ENCODE measurements at regions of chr14 and their contacts with region 1.

Region 1: DNA sequence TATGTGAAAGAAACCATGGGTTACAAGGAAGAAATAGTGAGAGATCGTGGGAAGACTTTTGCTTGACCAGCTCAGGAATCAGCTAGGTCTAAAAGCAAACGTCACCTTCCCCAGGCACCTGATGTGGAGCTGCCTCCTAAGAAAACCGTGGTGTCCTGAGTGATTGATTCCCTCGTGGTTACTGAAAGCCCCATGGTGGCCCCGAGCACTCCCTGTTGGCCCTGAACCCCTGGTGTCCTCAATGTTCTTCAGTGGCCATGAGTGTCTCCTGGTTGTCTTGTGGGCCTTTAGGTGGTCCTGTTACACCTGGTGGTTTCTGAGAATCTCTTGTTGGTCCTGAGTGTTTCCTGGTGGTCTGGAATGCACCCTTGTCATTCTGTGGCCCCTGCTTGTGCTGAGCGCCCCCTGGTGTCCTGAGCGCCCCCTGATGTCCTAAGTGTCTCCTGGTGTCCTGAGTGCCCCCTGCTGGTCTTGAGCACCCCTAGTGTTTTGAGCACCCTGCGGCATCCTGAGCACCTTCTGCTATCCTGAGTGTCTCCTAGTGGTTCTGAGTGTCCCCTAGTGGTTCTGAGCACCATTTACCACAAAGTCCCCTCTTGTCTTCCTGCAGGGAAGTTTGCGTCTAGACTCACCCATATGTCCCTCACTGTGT is 518.7 kb downstream of the TMEM121 start:
- DNase-seq: peak; percentile 10 to 76
- H3K4me3 ChIP-seq: no peak overlapping the region
- H3K4me1 ChIP-seq: no peaks in the 10 kb centered on the region
- H3K27me3 ChIP-seq: no peaks in the 10 kb centered on the region

Region 2: DNA sequence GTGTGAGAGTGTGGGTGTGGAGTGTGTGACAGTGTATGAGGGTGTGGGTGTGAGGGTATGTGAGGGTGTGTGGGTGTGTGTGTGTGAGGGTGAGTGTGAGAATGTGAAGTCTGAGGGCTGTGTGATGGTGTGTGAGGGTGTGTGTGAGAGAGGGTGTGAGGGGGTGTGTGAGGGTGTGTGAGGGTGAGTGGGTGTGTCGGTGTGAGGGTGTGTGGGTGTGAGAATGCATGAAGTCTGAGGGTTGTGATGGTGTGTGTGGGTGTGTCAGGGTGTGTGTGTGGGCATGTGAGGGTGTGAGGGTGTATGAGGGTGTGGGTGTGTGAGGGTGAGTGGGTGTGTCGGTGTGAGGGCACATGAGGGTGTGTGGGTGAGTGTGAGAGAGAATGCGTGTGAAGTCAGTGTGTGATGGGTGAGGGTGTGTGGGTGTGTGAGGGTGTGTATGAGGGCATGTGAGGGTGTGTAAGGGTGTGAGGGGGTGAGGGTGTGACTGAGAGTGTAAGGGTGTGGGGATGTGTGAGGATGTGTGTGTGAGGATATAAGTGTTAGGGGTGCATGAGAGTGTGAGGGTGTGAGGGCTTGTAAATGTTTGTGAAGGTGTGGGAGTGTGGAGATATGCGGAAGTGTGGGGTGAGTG is 482.2 kb before region 1 on chr14:
- in situ Hi-C with region 1: loop called (anchors 25 kb)
- DNase-seq: no peak
- H3K4me3 ChIP-seq: no peak overlapping the region
- H3K4me1 ChIP-seq: no peaks in the 10 kb centered on the region
- H3K27me3 ChIP-seq: no peaks in the 10 kb centered on the region

Region 3: DNA sequence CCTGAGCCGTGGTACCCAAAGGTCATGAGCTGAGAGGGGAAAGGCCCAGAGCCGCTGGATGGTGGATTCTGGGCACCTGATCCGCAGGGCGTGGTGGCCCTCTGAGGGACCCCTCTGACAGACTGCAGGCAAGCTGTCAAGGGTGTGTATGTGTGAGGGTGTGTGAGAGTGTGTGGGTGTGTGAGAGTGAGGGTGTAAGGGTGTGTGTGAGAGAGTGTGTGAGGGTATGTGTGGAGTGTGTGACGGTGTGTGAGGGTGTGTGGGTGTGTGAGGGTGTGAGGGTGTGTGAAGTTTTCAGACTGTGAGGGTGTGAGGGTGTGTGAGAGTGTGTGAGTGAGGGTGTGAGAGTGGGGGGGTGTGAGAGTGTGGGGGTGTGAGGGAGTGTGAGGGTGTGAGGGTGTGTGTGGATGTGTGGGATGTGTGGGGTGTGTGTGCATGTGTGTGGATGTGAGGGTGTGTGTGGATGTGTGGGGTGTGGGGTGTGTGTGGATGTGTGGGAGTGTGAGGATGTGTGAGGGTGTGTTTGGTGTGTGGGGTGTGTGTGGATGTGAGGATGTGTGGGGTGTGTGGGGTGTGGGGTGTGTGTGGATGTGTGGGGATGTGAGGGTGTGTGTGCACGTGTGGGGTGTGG is 362.0 kb before region 1 on chr14:
- in situ Hi-C with region 1: loop called (anchors 25 kb)
- DNase-seq: no peak
- H3K4me3 ChIP-seq: no peak overlapping the region
- H3K4me1 ChIP-seq: no peaks in the 10 kb centered on the region
- H3K27me3 ChIP-seq: no peaks in the 10 kb centered on the region

Region 4: DNA sequence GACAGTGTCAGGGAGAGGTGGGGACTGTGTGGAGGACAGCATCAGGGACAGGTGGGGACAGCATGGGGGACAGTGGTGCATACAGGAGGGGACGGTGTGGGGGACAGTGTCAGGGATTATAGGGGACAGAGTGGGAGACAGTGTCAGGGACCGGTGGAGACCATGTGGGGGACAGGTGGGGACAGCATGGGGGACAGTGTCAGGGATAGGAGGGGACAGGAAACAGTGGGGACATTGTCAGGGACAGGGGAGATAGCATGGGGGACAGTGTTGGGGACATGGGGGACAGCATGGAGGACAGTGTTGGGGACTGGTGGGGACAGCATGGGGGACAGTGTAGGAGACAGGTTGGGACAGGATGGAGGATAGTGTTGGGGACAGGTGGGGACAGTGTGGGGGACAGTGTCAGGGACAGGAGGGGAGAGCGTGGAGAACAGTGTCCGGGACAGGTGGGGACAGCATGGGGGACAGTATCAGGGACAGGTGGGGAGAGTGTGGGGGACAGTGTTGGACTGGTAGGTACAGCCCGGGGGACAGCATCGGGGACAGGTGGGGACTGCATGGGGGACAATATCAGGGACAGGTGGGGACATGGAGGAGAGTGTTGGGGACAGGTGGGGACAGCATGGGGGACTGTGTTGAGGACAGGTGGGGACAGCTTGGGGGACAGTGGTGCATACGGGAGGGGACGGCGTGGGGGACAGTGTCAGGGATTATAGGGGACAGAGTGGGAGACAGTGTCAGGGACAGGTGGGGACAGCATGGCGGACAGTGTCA is 306.6 kb before region 1 on chr14:
- in situ Hi-C with region 1: no loop called
- DNase-seq: no peak
- H3K4me3 ChIP-seq: no peak overlapping the region
- H3K4me1 ChIP-seq: no peaks in the 10 kb centered on the region
- H3K27me3 ChIP-seq: no peaks in the 10 kb centered on the region

Region 5: DNA sequence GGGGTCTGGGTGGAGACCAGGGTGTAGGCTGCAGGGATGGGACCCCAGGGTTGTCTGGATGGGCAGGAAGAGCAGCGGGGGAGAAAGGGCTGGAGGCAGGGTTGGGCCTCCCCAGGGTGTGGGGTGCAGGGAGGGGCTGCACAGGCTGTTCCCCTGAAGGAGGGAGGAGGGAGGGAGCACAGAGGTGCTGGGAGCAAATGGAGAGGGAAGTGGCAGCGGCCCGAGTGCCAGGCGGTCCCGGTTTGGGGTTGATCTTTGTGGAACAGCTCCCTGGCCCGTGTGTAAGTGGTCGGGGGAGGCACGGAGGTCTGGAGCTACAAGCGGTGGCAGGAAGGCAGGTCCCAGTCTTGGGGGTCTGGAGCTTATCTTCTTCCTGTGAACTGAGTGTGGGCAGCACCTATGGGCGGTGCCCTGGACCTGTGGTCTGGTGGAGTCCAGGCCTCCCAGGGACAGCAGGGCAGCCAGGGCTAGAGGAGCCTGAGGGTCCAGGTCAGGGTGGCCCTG is 127.1 kb before region 1 on chr14:
- in situ Hi-C with region 1: no loop called
- DNase-seq: no peak
- H3K4me3 ChIP-seq: no peak overlapping the region
- H3K4me1 ChIP-seq: no peaks in the 10 kb centered on the region
- H3K27me3 ChIP-seq: no peaks in the 10 kb centered on the region

Measured in HAP-1 (cell line).